CD14-positive monocyte (primary cell): ENCODE measurements at regions of chr16 and their contacts with region 1.

Region 1: GRCh38 chr16:57185944-57186871 is at the starts of genes PSME3IP1 and RSPRY1:
- DNase-seq: peak; percentile 99 to 100 (median 99)
- H3K4me3 ChIP-seq: peak within 1 kb of the TSS; percentile 76 to 99 (median 92)
- H3K4me3 Mint-ChIP-seq: peak within 1 kb of the TSS; percentile 100
- H3K27ac ChIP-seq: peak within 1 kb of the TSS; percentile 80 to 93
- H3K27ac Mint-ChIP-seq: peak within 1 kb of the TSS; percentile 92 to 98 (median 96)
- H3K4me1 ChIP-seq: peaks cover 28 to 30% of the 10 kb centered on the region in 2 donors
- H3K4me1 Mint-ChIP-seq: peaks cover 44% of the 10 kb centered on the region
- H3K27me3 ChIP-seq: no peaks in the 10 kb centered on the region
- H3K27me3 Mint-ChIP-seq: no peaks in the 10 kb centered on the region
- CTCF ChIP-seq: no peak
- polyA plus RNA-seq, gene PSME3IP1: 75.4 to 133 (median 78.6) TPM
- polyA plus RNA-seq, gene RSPRY1: 15.7 to 28.3 (median 21.3) TPM

Region 2: DNA sequence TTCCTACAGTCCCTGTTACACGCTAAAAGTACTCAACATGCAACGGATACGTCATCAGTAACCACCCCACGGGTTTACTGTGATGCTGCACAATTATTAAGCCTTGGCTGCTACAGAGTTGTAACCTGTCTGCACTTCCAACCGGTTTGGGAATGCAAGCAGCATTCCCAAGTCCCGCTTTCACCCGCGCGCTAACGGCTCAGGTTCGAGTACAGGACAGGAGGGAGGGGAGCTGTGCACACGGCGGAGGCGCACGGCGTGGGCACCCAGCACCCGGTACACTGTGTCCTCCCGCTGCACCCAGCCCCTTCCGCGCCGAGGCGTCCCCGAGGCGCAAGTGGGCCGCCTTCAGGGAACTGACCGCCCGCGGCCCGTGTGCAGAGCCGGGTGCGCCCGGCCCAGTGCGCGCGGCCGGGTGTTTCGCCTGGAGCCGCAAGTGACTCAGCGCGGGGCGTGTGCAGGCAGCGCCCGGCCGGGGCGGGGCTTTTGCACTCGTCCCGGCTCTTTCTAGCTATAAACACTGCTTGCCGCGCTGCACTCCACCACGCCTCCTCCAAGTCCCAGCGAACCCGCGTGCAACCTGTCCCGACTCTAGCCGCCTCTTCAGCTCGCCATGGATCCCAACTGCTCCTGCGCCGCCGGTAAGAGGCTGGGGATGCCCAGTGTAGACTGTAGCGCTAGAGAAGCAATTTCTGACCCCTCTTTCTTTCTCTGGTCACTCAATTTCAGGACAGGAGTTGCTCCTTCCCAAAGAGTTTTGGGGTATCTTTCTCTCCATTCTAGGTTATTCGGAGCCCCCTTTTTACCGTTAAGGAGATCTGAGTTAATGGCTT is 577.9 kb before region 1 on chr16 and contains the start of gene MT2A:
- intact Hi-C with region 1: loop called in 1 of 2 experiments (anchors 10 kb)
- DNase-seq: peak; percentile 84 to 91 (median 89)
- H3K4me3 ChIP-seq: peak within 1 kb of the TSS; percentile 87 to 97 (median 87)
- H3K4me3 Mint-ChIP-seq: peak within 1 kb of the TSS; percentile 87 to 94
- H3K27ac ChIP-seq: peak within 1 kb of the TSS; percentile 81 to 93
- H3K27ac Mint-ChIP-seq: peak within 1 kb of the TSS; percentile 88 to 96 (median 94)
- H3K4me1 ChIP-seq: peaks cover 34 to 41% of the 10 kb centered on the region in 2 donors
- H3K4me1 Mint-ChIP-seq: peaks cover 43% of the 10 kb centered on the region
- H3K27me3 ChIP-seq: no peaks in the 10 kb centered on the region
- H3K27me3 Mint-ChIP-seq: peaks cover 2 to 3% (median 2%) of the 10 kb centered on the region in 3 donors
- CTCF ChIP-seq: no peak
- polyA plus RNA-seq, gene MT2A: 26.8 to 228 (median 126) TPM

Region 3: GRCh38 chr16:56931892-56932720 is 254.1 kb before region 1 on chr16 and contains the start of gene HERPUD1:
- intact Hi-C with region 1: loop called in 1 of 2 experiments (anchors 5 kb)
- DNase-seq: peak; percentile 98 to 100 (median 99)
- H3K4me3 ChIP-seq: peak within 1 kb of the TSS; percentile 94 to 97 (median 96)
- H3K4me3 Mint-ChIP-seq: peak within 1 kb of the TSS; percentile 97 to 98
- H3K27ac ChIP-seq: peak within 1 kb of the TSS; percentile 97 to 99
- H3K27ac Mint-ChIP-seq: peak within 1 kb of the TSS; percentile 98 to 99 (median 98)
- H3K4me1 ChIP-seq: peaks cover 30 to 41% of the 10 kb centered on the region in 2 donors
- H3K4me1 Mint-ChIP-seq: peaks cover 35% of the 10 kb centered on the region
- H3K27me3 ChIP-seq: no peaks in the 10 kb centered on the region
- H3K27me3 Mint-ChIP-seq: peaks cover 0 to 7% (median 2%) of the 10 kb centered on the region in 3 donors
- CTCF ChIP-seq: no peak
- polyA plus RNA-seq, gene HERPUD1: 179 to 454 (median 186) TPM

Region 4: GRCh38 chr16:56944954-56945839 is 241.0 kb before region 1 on chr16:
- intact Hi-C with region 1: no loop called
- DNase-seq: no peak
- H3K4me3 ChIP-seq: no peak overlapping the region
- H3K4me3 Mint-ChIP-seq: no peak overlapping the region
- H3K27ac ChIP-seq: peak overlapping the region in 1 of 2 donors; percentile 3
- H3K27ac Mint-ChIP-seq: peak overlapping the region in 1 of 7 donors; percentile 57
- H3K4me1 ChIP-seq: peaks cover 3 to 4% of the 10 kb centered on the region in 2 donors
- H3K4me1 Mint-ChIP-seq: peaks cover 8% of the 10 kb centered on the region
- H3K27me3 ChIP-seq: no peaks in the 10 kb centered on the region
- H3K27me3 Mint-ChIP-seq: peaks cover 0 to 6% (median 0%) of the 10 kb centered on the region in 3 donors
- CTCF ChIP-seq: no peak

Region 5: GRCh38 chr16:57091975-57092785 is 94.0 kb before region 1 on chr16 and contains the start of gene CPNE2:
- intact Hi-C with region 1: loop called in 1 of 2 experiments (anchors 5 kb)
- DNase-seq: peak in 2 of 3 donors; percentile 30 to 40
- H3K4me3 ChIP-seq: peak within 1 kb of the TSS; percentile 54 to 86 (median 77)
- H3K4me3 Mint-ChIP-seq: peak within 1 kb of the TSS; percentile 78 to 87
- H3K27ac ChIP-seq: peak within 1 kb of the TSS; percentile 59 to 76
- H3K27ac Mint-ChIP-seq: peak within 1 kb of the TSS; percentile 70 to 89 (median 86)
- H3K4me1 ChIP-seq: peaks cover 41 to 48% of the 10 kb centered on the region in 2 donors
- H3K4me1 Mint-ChIP-seq: peaks cover 56% of the 10 kb centered on the region
- H3K27me3 ChIP-seq: no peaks in the 10 kb centered on the region
- H3K27me3 Mint-ChIP-seq: peaks cover 0 to 5% (median 0%) of the 10 kb centered on the region in 3 donors
- CTCF ChIP-seq: no peak
- polyA plus RNA-seq, gene CPNE2: 18.3 to 68.8 (median 23.9) TPM

Region 6: DNA sequence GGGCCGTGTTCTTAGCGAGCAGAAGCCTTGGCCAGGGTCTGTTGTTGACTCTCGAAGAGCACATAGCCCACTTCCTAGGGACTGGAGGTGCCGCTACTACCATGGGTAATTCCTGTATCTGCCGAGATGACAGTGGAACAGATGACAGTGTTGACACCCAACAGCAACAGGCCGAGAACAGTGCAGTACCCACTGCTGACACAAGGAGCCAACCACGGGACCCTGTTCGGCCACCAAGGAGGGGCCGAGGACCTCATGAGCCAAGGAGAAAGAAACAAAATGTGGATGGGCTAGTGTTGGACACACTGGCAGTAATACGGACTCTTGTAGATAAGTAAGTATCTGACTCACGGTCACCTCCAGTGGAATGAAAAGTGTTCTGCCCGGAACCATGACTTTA is 18.5 kb after region 1 on chr16:
- intact Hi-C with region 1: no loop called
- DNase-seq: no peak
- H3K4me3 ChIP-seq: no peak overlapping the region
- H3K4me3 Mint-ChIP-seq: no peak overlapping the region
- H3K27ac ChIP-seq: no peak overlapping the region
- H3K27ac Mint-ChIP-seq: no peak overlapping the region
- H3K4me1 ChIP-seq: no peaks in the 10 kb centered on the region
- H3K4me1 Mint-ChIP-seq: no peaks in the 10 kb centered on the region
- H3K27me3 ChIP-seq: no peaks in the 10 kb centered on the region
- H3K27me3 Mint-ChIP-seq: no peaks in the 10 kb centered on the region
- CTCF ChIP-seq: no peak

Region 7: DNA sequence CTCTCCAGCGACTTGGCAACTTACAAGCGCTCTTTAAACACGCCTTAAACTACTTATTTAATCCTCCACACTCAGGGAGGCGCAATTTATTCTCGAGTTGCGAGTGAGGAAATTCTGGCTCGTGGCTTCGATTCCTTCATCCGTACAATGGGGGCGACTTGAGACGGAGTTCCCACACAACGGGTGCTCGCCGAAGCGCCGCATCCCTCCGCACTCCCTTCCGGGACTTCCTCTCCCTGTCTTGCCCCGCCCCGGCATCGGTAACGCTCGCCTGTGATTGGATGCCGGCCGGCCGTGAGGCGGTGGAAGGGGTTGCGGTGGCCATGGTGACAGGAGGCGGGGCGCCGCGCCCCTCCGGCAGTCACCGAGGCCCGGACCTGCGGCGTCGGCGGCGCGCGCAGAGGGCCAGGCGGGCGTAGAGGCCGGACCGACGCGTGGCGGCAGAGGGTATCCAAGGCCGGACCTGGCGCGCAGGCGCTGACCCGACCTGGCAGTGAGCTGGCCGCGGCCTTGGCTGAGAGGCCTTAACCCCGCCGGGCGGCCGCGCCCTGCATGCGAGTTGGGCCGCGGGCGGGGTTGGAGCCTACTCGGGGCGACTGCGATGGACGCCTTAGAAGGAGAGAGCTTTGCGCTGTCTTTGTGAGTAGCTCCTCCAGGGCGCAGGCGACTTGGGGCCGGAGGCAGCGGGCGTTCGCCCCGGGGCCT is 58.7 kb after region 1 on chr16 and contains the start of gene ARL2BP:
- intact Hi-C with region 1: loop called (anchors 5 to 10 kb)
- DNase-seq: peak; percentile 96 to 98 (median 96)
- H3K4me3 ChIP-seq: peak within 1 kb of the TSS; percentile 54 to 84 (median 79)
- H3K4me3 Mint-ChIP-seq: peak within 1 kb of the TSS; percentile 86 to 92
- H3K27ac ChIP-seq: peak within 1 kb of the TSS; percentile 75 to 98
- H3K27ac Mint-ChIP-seq: peak within 1 kb of the TSS; percentile 96 to 99 (median 98)
- H3K4me1 ChIP-seq: peaks cover 27 to 36% of the 10 kb centered on the region in 2 donors
- H3K4me1 Mint-ChIP-seq: peaks cover 29% of the 10 kb centered on the region
- H3K27me3 ChIP-seq: no peaks in the 10 kb centered on the region
- H3K27me3 Mint-ChIP-seq: no peaks in the 10 kb centered on the region
- CTCF ChIP-seq: no peak
- polyA plus RNA-seq, gene ARL2BP: 35.4 to 84.6 (median 84.0) TPM

Region 8: GRCh38 chr16:57447186-57447962 is 261.2 kb after region 1 on chr16 and contains the starts of genes CIAPIN1 and COQ9:
- intact Hi-C with region 1: loop called in 1 of 2 experiments (anchors 10 kb)
- DNase-seq: peak; percentile 91 to 93 (median 91)
- H3K4me3 ChIP-seq: peak within 1 kb of the TSS; percentile 88 to 92 (median 92)
- H3K4me3 Mint-ChIP-seq: peak within 1 kb of the TSS; percentile 93 to 94
- H3K27ac ChIP-seq: peak within 1 kb of the TSS; percentile 40 to 89
- H3K27ac Mint-ChIP-seq: peak within 1 kb of the TSS; percentile 81 to 96 (median 87)
- H3K4me1 ChIP-seq: peaks cover 16 to 22% of the 10 kb centered on the region in 2 donors
- H3K4me1 Mint-ChIP-seq: peaks cover 19% of the 10 kb centered on the region
- H3K27me3 ChIP-seq: no peaks in the 10 kb centered on the region
- H3K27me3 Mint-ChIP-seq: no peaks in the 10 kb centered on the region
- CTCF ChIP-seq: no peak
- polyA plus RNA-seq, gene CIAPIN1: 24.0 to 46.5 (median 42.1) TPM
- polyA plus RNA-seq, gene COQ9: 32.7 to 47.8 (median 38.4) TPM